Activated CD4-positive, alpha-beta T cell treated with anti-CD3 and anti-CD28 coated beads for 36 hours (primary cell): ENCODE measurements at regions of chr2 and their contacts with region 1.

Region 1: GRCh38 chr2:170361090-170361936 is 183.4 kb downstream of the MYO3B start:
- DNase-seq: peak; percentile 76
- ATAC-seq: peak; percentile 58
- H3K4me3 Mint-ChIP-seq: no peak overlapping the region
- H3K27ac Mint-ChIP-seq: peak overlapping the region; percentile 90
- H3K4me1 Mint-ChIP-seq: peaks cover 29% of the 10 kb centered on the region
- H3K27me3 Mint-ChIP-seq: peaks cover 7% of the 10 kb centered on the region

Region 2: GRCh38 chr2:169464882-169465281 is 896.4 kb before region 1 on chr2:
- CTCF ChIA-PET with region 1: no interaction called
- POLR2A ChIA-PET with region 1: no interaction called
- intact Hi-C with region 1: no loop called
- DNase-seq: no peak
- ATAC-seq: peak; percentile 59
- H3K4me3 Mint-ChIP-seq: no peak overlapping the region
- H3K27ac Mint-ChIP-seq: no peak overlapping the region
- H3K4me1 Mint-ChIP-seq: no peaks in the 10 kb centered on the region
- H3K27me3 Mint-ChIP-seq: no peaks in the 10 kb centered on the region

Region 3: GRCh38 chr2:170324640-170325046 is 36.7 kb before region 1 on chr2:
- CTCF ChIA-PET with region 1: interaction called, 10 read pairs
- POLR2A ChIA-PET with region 1: no interaction called
- intact Hi-C with region 1: loop called (anchors 2 to 5 kb)
- DNase-seq: peak; percentile 63
- ATAC-seq: peak; percentile 36
- H3K4me3 Mint-ChIP-seq: no peak overlapping the region
- H3K27ac Mint-ChIP-seq: no peak overlapping the region
- H3K4me1 Mint-ChIP-seq: no peaks in the 10 kb centered on the region
- H3K27me3 Mint-ChIP-seq: peaks cover 4% of the 10 kb centered on the region

Region 4: GRCh38 chr2:170341684-170342623 is 19.4 kb before region 1 on chr2:
- CTCF ChIA-PET with region 1: interaction called, 10 read pairs
- POLR2A ChIA-PET with region 1: no interaction called
- intact Hi-C with region 1: no loop called
- DNase-seq: no peak
- ATAC-seq: no peak
- H3K4me3 Mint-ChIP-seq: no peak overlapping the region
- H3K27ac Mint-ChIP-seq: peak overlapping the region; percentile 13
- H3K4me1 Mint-ChIP-seq: peaks cover 22% of the 10 kb centered on the region
- H3K27me3 Mint-ChIP-seq: peaks cover 5% of the 10 kb centered on the region

Region 5: DNA sequence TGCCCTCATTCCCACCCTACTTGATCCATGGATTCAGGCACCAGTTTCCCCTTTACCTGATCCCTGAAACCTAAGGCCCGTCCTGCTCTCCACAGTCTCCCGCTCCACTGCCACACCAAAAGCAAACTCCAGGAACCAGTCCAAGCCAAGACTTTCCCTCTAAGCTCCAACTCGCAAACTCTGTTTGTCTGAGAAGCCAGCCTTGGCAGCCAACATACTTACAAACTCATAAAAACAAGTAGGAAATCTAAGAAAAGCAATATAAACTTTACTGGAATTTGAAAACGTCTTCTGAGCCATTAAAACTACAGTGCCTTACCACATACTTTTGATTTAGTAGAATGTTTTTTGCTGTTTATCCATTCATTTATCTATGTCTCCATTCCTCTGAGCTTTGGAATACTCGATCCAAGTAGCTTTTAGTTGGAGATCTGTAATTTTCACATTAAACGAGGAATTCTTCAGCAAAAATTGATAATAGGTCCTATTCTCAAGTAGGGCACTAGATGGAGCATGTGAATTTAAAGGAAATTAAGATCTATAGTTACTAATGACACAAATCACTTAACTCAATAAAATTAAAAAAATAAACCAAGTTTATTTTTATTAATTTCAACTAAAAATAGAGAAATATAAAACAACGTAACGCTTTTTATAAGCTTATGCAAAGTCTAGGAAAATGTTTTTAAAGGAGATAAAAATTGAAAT is 16.3 kb after region 1 on chr2:
- CTCF ChIA-PET with region 1: interaction called, 11 read pairs
- POLR2A ChIA-PET with region 1: no interaction called
- intact Hi-C with region 1: no loop called
- DNase-seq: no peak
- ATAC-seq: no peak
- H3K4me3 Mint-ChIP-seq: no peak overlapping the region
- H3K27ac Mint-ChIP-seq: no peak overlapping the region
- H3K4me1 Mint-ChIP-seq: peaks cover 10% of the 10 kb centered on the region
- H3K27me3 Mint-ChIP-seq: peaks cover 12% of the 10 kb centered on the region

Region 6: GRCh38 chr2:171626949-171627348 is 1265.6 kb after region 1 on chr2:
- CTCF ChIA-PET with region 1: no interaction called
- POLR2A ChIA-PET with region 1: no interaction called
- intact Hi-C with region 1: no loop called
- DNase-seq: no peak
- ATAC-seq: no peak
- H3K4me3 Mint-ChIP-seq: no peak overlapping the region
- H3K27ac Mint-ChIP-seq: no peak overlapping the region
- H3K4me1 Mint-ChIP-seq: no peaks in the 10 kb centered on the region
- H3K27me3 Mint-ChIP-seq: peaks cover 2% of the 10 kb centered on the region